Activated CD4-positive, alpha-beta memory T cell treated with anti-CD3 and anti-CD28 coated beads, Interleukin-2, amount 10 ng/mL, durations not matched to agents 7 days and 5 days (primary cell): ENCODE measurements at regions of chr5 and their contacts with region 1.

Region 1: GRCh38 chr5:179623003-179623880 is at the start of gene HNRNPH1:
- DNase-seq: peak; percentile 99
- H3K4me3 Mint-ChIP-seq: peak within 1 kb of the TSS; percentile 91
- H3K27ac Mint-ChIP-seq: peak within 1 kb of the TSS; percentile 98
- H3K4me1 Mint-ChIP-seq: peaks cover 44% of the 10 kb centered on the region
- H3K27me3 Mint-ChIP-seq: no peaks in the 10 kb centered on the region
- total RNA-seq, gene HNRNPH1: 675 to 699 TPM

Region 2: DNA sequence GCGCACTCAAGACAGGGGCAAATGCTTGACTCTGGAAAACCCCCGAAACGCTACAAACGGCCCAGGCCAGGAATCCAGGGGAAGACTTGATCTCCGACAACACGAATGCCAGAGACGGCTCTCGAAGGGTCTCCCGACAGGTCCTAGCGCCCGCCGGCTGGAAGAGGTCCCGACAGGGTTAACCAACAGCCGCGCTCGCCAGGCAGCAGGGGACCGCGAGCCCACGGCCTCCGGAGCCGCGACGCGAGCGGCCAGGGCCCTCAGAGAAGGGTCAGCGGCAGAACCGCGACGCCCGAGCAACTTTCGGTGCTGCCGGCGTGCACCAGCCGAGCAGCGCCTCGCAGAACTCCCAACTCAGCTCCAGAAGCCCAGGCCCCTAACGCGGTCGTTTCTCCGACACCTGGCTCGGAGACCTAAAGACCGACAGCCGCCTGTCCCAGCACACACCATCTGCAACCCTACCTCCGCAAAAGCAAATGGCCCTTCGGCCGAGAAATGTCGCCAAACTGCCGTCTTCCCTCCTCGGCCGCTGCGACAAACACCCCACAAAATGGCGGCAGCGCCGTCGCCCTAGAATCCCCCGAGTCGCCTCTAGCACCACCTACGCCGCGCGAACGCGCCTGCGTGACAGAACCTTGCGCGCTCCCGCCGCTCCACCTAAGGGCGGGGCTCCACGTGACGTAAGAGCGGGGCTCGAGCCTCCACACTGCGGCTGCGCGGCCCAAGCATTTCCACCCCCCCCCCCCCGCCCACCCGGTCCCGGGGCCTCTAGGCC is 996.6 kb before region 1 on chr5 and contains the start of gene CLK4:
- CTCF ChIA-PET with region 1: no interaction called
- POLR2A ChIA-PET with region 1: interaction called, 10 read pairs
- DNase-seq: peak; percentile 96
- H3K4me3 Mint-ChIP-seq: peak within 1 kb of the TSS; percentile 97
- H3K27ac Mint-ChIP-seq: peak within 1 kb of the TSS; percentile 98
- H3K4me1 Mint-ChIP-seq: peaks cover 28% of the 10 kb centered on the region
- H3K27me3 Mint-ChIP-seq: no peaks in the 10 kb centered on the region
- total RNA-seq, gene CLK4: 29.5 to 32.0 TPM

Region 3: GRCh38 chr5:179404321-179405053 is 218.8 kb before region 1 on chr5:
- CTCF ChIA-PET with region 1: no interaction called
- POLR2A ChIA-PET with region 1: no interaction called
- DNase-seq: peak; percentile 2
- H3K4me3 Mint-ChIP-seq: no peak overlapping the region
- H3K27ac Mint-ChIP-seq: no peak overlapping the region
- H3K4me1 Mint-ChIP-seq: no peaks in the 10 kb centered on the region
- H3K27me3 Mint-ChIP-seq: no peaks in the 10 kb centered on the region

Region 4: DNA sequence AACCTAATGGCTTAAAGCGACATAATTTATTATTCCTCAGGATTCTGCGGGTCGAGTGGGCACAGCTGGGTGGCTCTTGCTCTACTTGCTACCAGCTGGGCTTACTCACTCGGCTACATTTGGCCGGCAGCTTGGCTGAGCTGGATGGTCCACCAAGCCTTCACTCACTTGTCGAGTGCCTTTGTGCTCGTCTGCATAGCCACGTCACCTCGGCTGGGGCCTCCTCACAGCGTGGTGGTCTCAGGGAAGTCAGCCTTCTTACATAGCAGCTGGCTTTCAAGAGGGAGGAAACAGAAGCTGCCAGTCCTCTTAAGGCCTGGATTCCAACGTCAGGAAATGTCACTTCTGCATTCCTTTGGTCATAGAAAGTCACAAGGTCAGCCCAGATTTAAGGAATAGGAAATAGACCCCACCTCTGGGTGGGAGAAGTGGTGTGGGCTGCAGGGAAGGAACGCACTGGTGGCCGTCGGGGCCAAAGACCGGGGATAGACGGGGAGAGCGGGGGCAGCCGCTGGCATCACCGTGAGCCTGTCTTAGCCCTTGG is 148.0 kb before region 1 on chr5:
- CTCF ChIA-PET with region 1: no interaction called
- POLR2A ChIA-PET with region 1: no interaction called
- DNase-seq: no peak
- H3K4me3 Mint-ChIP-seq: no peak overlapping the region
- H3K27ac Mint-ChIP-seq: no peak overlapping the region
- H3K4me1 Mint-ChIP-seq: no peaks in the 10 kb centered on the region
- H3K27me3 Mint-ChIP-seq: no peaks in the 10 kb centered on the region

Region 5: DNA sequence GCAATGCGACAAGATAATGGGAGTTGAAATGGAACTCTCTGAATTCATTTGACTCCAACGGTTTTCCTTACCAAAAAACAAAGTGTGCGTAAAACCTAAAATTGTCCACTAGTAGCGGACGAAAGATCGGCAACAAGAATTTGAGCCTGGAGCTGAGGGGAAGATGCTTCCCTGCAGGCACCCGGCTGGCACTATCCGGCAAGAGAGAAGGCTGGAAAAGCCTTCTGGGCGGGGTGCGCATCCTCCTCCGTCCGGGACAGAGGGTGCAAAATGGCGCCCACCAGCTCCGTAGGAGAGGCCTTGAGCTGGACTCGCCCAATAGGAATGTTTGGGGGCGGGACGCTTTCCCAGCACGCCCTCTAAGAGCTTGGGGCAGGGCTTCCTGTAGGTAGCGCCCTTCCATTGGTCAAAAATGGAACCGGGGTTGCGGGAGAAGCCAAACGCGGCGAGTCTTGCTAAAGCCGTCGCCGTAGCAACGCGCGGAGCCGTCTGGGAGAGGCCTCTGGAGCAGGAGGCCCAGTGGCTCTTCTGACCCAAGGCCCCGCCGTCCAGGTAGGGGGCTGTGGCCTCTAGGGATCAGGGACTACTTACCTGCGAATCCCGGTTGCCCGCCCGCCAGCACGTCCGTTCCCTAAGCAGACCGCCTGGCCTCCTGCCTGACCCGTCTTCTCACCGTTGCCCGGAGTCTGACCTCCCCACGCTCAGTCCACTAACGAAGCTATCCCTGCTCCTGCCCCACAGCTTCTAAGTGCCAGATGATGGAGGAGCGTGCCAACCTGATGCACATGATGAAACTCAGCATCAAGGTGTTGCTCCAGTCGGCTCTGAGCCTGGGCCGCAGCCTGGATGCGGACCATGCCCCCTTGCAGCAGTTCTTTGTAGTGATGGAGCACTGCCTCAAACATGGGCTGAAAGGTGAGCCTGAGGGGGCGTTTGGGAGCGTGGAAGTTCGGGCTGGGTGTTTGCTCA is 63.7 kb before region 1 on chr5:
- CTCF ChIA-PET with region 1: interaction called, 4 read pairs
- POLR2A ChIA-PET with region 1: interaction called, 51 read pairs
- DNase-seq: peak; percentile 96
- H3K4me3 Mint-ChIP-seq: peak overlapping the region; percentile 88
- H3K27ac Mint-ChIP-seq: peak overlapping the region; percentile 81
- H3K4me1 Mint-ChIP-seq: peaks cover 22% of the 10 kb centered on the region
- H3K27me3 Mint-ChIP-seq: no peaks in the 10 kb centered on the region

Region 6: DNA sequence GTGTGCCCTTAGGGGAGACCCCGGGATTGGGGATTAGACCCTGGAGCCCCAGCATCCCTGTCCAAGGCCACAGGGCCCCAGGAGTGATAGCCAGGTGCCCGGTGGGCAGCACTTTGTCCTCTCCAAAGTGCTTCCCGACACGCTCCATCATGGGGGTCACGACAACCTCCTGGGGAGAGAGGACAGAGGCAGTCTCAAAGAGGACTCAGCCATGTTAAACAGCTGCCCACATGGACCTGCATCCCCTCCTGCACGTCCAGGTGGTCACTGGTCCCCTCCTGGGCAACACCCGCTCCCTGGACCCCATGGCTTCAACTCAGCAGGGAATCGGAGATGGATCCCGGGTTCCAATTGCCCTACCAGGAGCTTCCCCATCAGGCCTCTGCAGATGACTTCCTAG is 20.3 kb after region 1 on chr5:
- CTCF ChIA-PET with region 1: no interaction called
- POLR2A ChIA-PET with region 1: interaction called, 15 read pairs
- DNase-seq: no peak
- H3K4me3 Mint-ChIP-seq: no peak overlapping the region
- H3K27ac Mint-ChIP-seq: no peak overlapping the region
- H3K4me1 Mint-ChIP-seq: no peaks in the 10 kb centered on the region
- H3K27me3 Mint-ChIP-seq: peaks cover 6% of the 10 kb centered on the region

Region 7: GRCh38 chr5:179697993-179698934 is 75.0 kb after region 1 on chr5:
- CTCF ChIA-PET with region 1: interaction called, 7 read pairs
- POLR2A ChIA-PET with region 1: interaction called, 87 read pairs
- DNase-seq: peak; percentile 99
- H3K4me3 Mint-ChIP-seq: peak overlapping the region; percentile 99
- H3K27ac Mint-ChIP-seq: peak overlapping the region; percentile 98
- H3K4me1 Mint-ChIP-seq: peaks cover 40% of the 10 kb centered on the region
- H3K27me3 Mint-ChIP-seq: no peaks in the 10 kb centered on the region

Region 8: DNA sequence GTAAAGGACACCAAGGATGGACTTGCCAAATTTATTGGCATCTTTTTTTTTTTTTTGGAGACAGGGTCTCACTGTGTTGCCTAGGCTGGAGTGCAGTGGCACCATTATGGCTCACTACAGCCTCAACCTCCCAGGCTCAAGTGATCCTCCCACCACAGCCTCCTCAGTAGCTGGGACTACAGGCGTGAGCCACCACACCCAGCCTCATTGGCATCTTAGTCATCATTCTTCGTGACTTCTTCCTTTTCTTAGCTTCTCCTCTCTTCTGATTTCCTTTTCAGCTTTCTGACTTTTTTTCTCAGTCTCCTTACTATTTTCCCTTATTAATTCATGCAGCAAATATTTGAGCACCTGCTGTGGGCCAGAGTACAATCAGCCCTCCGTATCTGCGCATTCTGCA is 115.5 kb after region 1 on chr5:
- CTCF ChIA-PET with region 1: no interaction called
- POLR2A ChIA-PET with region 1: interaction called, 30 read pairs
- DNase-seq: no peak
- H3K4me3 Mint-ChIP-seq: no peak overlapping the region
- H3K27ac Mint-ChIP-seq: no peak overlapping the region
- H3K4me1 Mint-ChIP-seq: peaks cover 44% of the 10 kb centered on the region
- H3K27me3 Mint-ChIP-seq: no peaks in the 10 kb centered on the region